Activated CD8-positive, alpha-beta T cell treated with anti-CD3 and anti-CD28 coated beads for 36 hours (primary cell): ENCODE measurements at regions of chr19 and their contacts with region 1.

Region 1: DNA sequence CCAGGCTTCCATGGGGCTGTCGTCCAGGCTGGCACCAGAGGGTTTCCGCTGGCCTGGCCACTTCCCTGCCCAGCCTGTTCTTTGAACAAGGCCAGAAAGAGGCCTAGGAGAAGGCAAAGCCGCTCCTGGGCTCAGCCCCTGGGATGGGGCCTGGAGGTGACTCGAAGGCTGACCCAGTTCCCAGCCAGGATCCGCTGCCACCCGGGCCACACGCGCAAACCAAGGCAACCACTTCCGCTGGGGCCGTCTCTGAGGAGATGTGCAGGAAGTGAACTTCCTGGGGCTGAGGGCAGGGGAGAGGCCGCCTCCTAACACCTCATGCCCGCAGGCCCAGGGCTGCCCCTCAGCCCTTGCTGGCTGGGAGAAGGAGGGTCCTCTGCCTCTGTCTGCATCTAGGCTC is 15.2 kb downstream of the PLEKHF1 start:
- DNase-seq: peak; percentile 92
- ATAC-seq: peak; percentile 90
- H3K4me3 Mint-ChIP-seq: peak overlapping the region; percentile 52
- H3K27ac Mint-ChIP-seq: peak overlapping the region; percentile 83
- H3K4me1 Mint-ChIP-seq: peaks cover 72% of the 10 kb centered on the region
- H3K27me3 Mint-ChIP-seq: no peaks in the 10 kb centered on the region
- CTCF ChIP-seq: no peak

Region 2: DNA sequence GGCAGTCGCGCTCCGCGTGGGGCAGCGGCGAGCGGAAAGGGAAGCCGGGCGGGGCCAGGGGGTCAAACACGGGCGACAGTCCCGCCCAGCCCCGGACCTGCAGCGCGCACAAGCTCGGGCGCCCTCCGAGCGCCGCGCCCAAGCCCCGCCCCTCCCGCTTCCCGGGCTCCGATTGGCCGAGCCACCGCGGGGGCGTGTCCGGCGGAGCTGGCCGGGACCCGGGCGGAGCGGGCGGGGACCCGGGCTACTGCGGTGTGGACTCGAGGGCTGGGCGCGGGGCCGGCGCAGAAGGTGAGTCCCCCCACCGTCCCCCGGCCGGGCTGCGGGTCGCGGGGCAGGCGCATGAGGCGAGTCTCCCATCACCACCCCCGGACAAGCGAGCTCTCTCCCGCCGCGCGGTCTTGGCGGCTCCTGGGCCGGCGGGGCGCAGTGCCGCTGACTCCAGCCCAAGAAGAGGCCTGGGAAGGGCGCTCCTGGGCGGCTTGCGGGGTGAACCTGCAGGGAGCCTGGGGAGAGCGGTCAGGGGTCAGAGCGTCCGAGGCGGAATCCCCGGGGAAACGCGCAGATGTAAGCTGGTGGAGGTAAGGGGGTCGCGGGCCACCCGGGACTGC is 15.1 kb before region 1 on chr19 and contains the start of gene PLEKHF1:
- CTCF ChIA-PET with region 1: interaction called, 30 read pairs
- POLR2A ChIA-PET with region 1: interaction called, 59 read pairs
- intact Hi-C with region 1: no loop called
- DNase-seq: peak; percentile 87
- ATAC-seq: peak; percentile 79
- H3K4me3 Mint-ChIP-seq: peak within 1 kb of the TSS; percentile 88
- H3K27ac Mint-ChIP-seq: peak within 1 kb of the TSS; percentile 90
- H3K4me1 Mint-ChIP-seq: peaks cover 66% of the 10 kb centered on the region
- H3K27me3 Mint-ChIP-seq: no peaks in the 10 kb centered on the region
- CTCF ChIP-seq: no peak
- total RNA-seq, gene PLEKHF1: 30.4 to 31.7 TPM